ENCODE measurements at regions of chr5 and their contacts with region 1.

Region 1: DNA sequence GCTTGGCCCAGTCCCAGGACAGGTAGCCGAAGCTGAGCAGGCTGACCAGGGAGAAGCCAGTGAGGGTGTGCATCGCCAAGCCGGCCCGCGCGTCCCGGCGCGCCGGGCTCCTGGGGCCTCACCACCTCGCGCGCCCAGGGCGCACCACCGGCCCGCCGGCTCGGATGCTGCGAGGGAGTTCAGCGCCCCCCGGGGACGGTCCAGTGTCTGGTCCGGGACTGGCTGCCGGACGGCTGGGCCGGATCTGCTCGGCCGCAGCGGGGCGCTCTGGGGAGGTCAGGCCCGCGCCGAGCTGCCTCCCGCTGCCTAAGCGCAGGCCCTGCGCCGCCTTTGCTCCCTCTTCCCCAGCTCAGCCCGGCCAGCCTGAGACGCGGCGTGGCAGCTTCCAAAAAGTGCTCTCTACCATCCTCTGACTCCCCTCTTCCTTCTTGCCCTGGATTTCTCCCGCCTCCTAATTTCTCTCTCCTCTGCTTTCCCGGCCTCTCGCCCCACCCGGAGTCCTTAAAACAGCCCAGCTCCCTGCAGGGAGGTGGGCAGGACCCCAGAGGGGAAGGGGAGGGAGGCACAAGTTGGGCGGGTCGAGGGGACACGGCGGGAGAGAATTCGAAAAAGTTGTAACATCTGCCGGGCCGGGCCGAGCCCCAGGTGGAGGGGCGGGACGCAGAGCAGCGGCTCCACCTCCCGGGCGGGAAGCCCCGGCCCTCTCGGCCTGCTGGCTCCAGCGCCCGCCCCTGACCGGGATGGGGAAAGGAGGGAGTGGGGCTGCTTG is at the start of gene ARSI:
- DNase-seq: peak; percentile 88
- ATAC-seq: peak; percentile 87
- H3K4me3 Mint-ChIP-seq: peak within 1 kb of the TSS; percentile 88
- H3K27ac Mint-ChIP-seq: peak within 1 kb of the TSS; percentile 93
- H3K4me1 Mint-ChIP-seq: peaks cover 62% of the 10 kb centered on the region
- H3K27me3 Mint-ChIP-seq: peaks cover 17% of the 10 kb centered on the region
- CTCF ChIP-seq: no peak
- total RNA-seq, gene ARSI: 5.9 to 6.9 TPM (median 6.6 TPM) in 3 replicates

Region 2: DNA sequence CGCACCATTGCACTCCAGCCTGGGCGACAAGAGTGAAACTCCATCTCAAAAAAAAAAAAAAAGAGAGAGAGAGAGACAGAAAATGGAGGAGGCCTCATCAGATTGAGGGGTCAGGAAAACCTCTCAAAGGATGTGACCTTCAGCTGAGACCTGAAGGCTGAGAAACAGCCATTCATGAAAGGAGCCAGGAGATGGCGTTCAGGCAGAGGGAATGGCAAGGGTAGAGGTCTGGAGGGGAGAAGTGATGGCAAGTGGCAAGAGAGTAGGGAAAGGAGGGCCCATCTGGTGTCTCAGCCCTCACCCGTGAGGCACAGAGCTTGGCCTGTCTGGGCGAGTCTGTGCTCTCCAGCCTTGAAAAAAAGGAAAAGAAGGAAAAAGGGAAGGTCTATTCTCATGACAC is 30.0 kb before region 1 on chr5:
- CTCF ChIA-PET with region 1: interaction called, 12 read pairs
- POLR2A ChIA-PET with region 1: interaction called, 5 read pairs
- DNase-seq: peak; percentile 56
- ATAC-seq: peak; percentile 93
- H3K4me3 Mint-ChIP-seq: no peak overlapping the region
- H3K27ac Mint-ChIP-seq: no peak overlapping the region
- H3K4me1 Mint-ChIP-seq: peaks cover 10% of the 10 kb centered on the region
- H3K27me3 Mint-ChIP-seq: no peaks in the 10 kb centered on the region
- CTCF ChIP-seq: no peak

Region 3: GRCh38 chr5:150289551-150290390 is 12.7 kb before region 1 on chr5 and contains the start of gene CAMK2A:
- CTCF ChIA-PET with region 1: interaction called, 27 read pairs
- POLR2A ChIA-PET with region 1: no interaction called
- DNase-seq: peak; percentile 75
- ATAC-seq: peak; percentile 36
- H3K4me3 Mint-ChIP-seq: no peak within 1 kb of the TSS
- H3K27ac Mint-ChIP-seq: no peak within 1 kb of the TSS
- H3K4me1 Mint-ChIP-seq: peaks cover 9% of the 10 kb centered on the region
- H3K27me3 Mint-ChIP-seq: no peaks in the 10 kb centered on the region; the same call in 1 of the 2 replicates
- CTCF ChIP-seq: no peak
- total RNA-seq, gene CAMK2A: 0.13 to 0.16 TPM (median 0.14 TPM) in 3 replicates

Region 4: DNA sequence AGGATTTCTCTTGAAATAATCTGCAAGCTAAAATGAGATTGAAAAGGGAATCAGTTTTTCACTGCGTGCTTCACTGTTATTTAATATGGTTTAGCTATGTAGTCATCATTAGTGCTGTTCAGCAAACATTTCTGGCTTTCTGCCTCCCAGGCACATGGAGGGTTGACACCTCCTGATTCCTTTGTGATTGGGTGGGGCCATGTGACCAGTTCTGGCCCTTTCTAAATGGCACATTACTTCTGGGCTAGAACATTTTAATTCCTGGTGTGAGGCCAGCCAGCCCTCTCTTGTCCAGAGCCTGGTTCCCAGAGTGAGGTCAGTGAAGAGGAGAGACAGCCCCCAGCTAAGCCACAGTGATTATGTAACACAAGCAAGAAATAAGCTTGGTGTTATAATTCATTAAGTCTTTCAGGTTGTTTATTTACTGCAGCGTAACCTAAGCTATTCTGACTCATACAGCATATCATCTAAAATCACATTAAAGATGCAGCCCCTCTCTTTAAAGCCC is 17.6 kb after region 1 on chr5:
- CTCF ChIA-PET with region 1: interaction called, 10 read pairs
- POLR2A ChIA-PET with region 1: interaction called, 5 read pairs
- DNase-seq: no peak
- ATAC-seq: no peak
- H3K4me3 Mint-ChIP-seq: no peak overlapping the region
- H3K27ac Mint-ChIP-seq: no peak overlapping the region
- H3K4me1 Mint-ChIP-seq: peaks cover 11% of the 10 kb centered on the region
- H3K27me3 Mint-ChIP-seq: no peaks in the 10 kb centered on the region; the same call in 1 of the 2 replicates
- CTCF ChIP-seq: no peak

Region 5: GRCh38 chr5:150350524-150351344 is 48.2 kb after region 1 on chr5:
- CTCF ChIA-PET with region 1: interaction called, 32 read pairs
- POLR2A ChIA-PET with region 1: no interaction called
- DNase-seq: peak; percentile 88
- ATAC-seq: peak; percentile 92
- H3K4me3 Mint-ChIP-seq: no peak overlapping the region
- H3K27ac Mint-ChIP-seq: peak overlapping the region; percentile 67
- H3K4me1 Mint-ChIP-seq: peaks cover 13% of the 10 kb centered on the region
- H3K27me3 Mint-ChIP-seq: peaks cover 2% of the 10 kb centered on the region; the same call in 1 of the 2 replicates
- CTCF ChIP-seq: peak; percentile 65

Measured in WTC11 (cell line).